Activated CD8-positive, alpha-beta T cell treated with anti-CD3 and anti-CD28 coated beads, Interleukin-2, amount 10 ng/mL, durations not matched to agents 7 days and 5 days (primary cell): ENCODE measurements at regions of chr9 and their contacts with region 1.

Region 1: GRCh38 chr9:114653556-114654159 is 3.9 kb downstream of the TEX53 start:
- DNase-seq: peak; percentile 92
- ATAC-seq: peak; percentile 84
- H3K4me3 Mint-ChIP-seq: no peak overlapping the region
- H3K27ac Mint-ChIP-seq: peak overlapping the region; percentile 70
- H3K4me1 Mint-ChIP-seq: peaks cover 19% of the 10 kb centered on the region
- H3K27me3 Mint-ChIP-seq: no peaks in the 10 kb centered on the region

Region 2: DNA sequence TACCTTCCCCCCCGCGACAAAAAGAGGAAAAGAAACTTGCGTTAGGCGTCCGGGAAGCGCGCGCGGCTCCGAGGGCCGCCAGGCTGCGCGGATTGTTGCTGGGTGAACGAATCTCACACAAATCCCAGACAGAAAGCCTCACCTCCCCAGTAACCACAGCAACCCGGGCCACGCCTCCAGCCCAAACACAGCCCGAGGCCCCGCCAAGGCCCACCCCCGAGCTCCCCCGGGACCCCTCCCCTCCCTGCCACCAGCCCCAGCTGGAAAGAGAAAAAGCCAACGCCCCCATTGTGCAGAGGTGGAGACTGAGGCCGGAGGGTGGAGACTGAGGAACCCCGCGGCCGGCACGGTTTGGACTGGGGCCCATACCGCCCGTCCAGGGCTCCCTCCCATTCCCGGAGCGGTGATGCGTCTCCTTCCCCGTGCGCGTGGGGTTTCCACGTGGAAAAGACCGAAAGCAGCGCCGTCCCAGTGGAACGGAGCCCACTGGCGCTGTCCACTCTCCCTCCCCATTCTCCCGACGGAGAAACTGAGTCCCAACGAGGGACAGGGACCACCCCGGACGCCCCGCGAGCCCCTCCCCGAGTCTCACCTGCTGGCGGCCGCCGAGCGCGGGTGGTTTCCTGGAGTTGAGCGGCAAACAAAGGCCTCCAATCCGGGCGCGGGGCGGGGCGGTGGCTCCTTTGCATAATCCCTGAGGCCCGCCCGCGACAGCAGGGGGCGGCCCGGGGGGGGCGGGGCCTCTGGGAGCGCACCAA is 255.6 kb before region 1 on chr9:
- CTCF ChIA-PET with region 1: interaction called, 292 read pairs
- POLR2A ChIA-PET with region 1: no interaction called
- DNase-seq: peak; percentile 98
- ATAC-seq: peak; percentile 87
- H3K4me3 Mint-ChIP-seq: peak overlapping the region; percentile 99
- H3K27ac Mint-ChIP-seq: peak overlapping the region; percentile 90
- H3K4me1 Mint-ChIP-seq: peaks cover 50% of the 10 kb centered on the region
- H3K27me3 Mint-ChIP-seq: peaks cover 3% of the 10 kb centered on the region

Region 3: DNA sequence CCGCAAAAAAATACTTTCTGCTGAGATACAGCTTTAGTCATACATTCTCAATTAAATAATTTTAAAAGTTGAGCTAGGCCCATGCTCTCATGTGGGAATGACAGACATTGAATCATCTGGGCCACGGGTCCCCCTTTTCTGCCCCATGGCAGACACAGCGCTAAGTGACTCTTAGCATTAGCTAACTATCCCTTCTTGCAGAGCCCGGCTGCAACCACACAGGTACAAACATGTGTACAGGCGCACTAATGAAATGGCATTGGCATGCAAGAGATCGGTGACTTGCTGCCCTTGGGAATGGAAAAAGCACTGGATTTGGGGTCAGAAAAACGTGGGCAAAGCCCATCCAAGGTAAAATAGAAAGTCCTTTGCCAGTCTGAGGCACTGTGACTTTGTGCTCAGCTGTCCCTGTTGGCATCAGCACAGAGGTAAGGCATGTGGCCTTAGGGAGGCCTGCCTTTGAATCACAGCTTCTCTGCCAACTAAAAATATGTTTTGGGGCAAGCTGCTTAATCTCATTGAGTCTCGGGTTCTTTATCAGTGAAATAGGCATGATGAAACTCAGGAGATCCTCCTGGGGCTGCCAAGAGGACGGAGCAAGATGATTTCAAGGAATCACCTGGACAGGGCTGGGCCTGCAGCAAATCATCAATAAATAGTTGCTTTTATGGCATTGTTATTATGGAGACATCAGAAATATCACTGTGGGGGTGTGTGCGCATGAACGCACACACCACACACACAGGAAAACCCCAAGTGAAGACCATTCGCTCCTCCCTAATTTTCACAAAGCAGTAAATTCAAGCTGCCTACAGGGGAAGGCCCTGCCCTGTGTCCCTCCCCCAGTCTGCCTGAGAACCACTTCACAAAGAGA is 202.6 kb before region 1 on chr9:
- CTCF ChIA-PET with region 1: interaction called, 11 read pairs
- POLR2A ChIA-PET with region 1: no interaction called
- DNase-seq: no peak
- ATAC-seq: no peak
- H3K4me3 Mint-ChIP-seq: no peak overlapping the region
- H3K27ac Mint-ChIP-seq: no peak overlapping the region
- H3K4me1 Mint-ChIP-seq: peaks cover 24% of the 10 kb centered on the region
- H3K27me3 Mint-ChIP-seq: peaks cover 2% of the 10 kb centered on the region

Region 4: GRCh38 chr9:114518599-114519022 is 135.0 kb before region 1 on chr9:
- CTCF ChIA-PET with region 1: interaction called, 16 read pairs
- POLR2A ChIA-PET with region 1: interaction called, 3 read pairs
- DNase-seq: no peak
- ATAC-seq: no peak
- H3K4me3 Mint-ChIP-seq: no peak overlapping the region
- H3K27ac Mint-ChIP-seq: no peak overlapping the region
- H3K4me1 Mint-ChIP-seq: peaks cover 13% of the 10 kb centered on the region
- H3K27me3 Mint-ChIP-seq: peaks cover 34% of the 10 kb centered on the region

Region 5: GRCh38 chr9:114616653-114617520 is 36.8 kb before region 1 on chr9:
- CTCF ChIA-PET with region 1: interaction called, 22 read pairs
- POLR2A ChIA-PET with region 1: interaction called, 7 read pairs
- DNase-seq: no peak
- ATAC-seq: peak; percentile 21
- H3K4me3 Mint-ChIP-seq: peak overlapping the region; percentile 28
- H3K27ac Mint-ChIP-seq: peak overlapping the region; percentile 88
- H3K4me1 Mint-ChIP-seq: peaks cover 49% of the 10 kb centered on the region
- H3K27me3 Mint-ChIP-seq: no peaks in the 10 kb centered on the region

Region 6: GRCh38 chr9:114674798-114675540 is 21.3 kb after region 1 on chr9:
- CTCF ChIA-PET with region 1: interaction called, 10 read pairs
- POLR2A ChIA-PET with region 1: no interaction called
- DNase-seq: no peak
- ATAC-seq: no peak
- H3K4me3 Mint-ChIP-seq: no peak overlapping the region
- H3K27ac Mint-ChIP-seq: no peak overlapping the region
- H3K4me1 Mint-ChIP-seq: peaks cover 38% of the 10 kb centered on the region
- H3K27me3 Mint-ChIP-seq: peaks cover 18% of the 10 kb centered on the region